CD8-positive, alpha-beta T cell (primary cell): ENCODE measurements at regions of chr3 and their contacts with region 1.

Region 1: GRCh38 chr3:5187156-5187919 is at the start of gene EDEM1:
- DNase-seq: peak; percentile 85 to 98 (median 93)
- ATAC-seq: peak; percentile 82
- H3K4me3 ChIP-seq: peak within 1 kb of the TSS; percentile 84 to 92
- H3K4me3 Mint-ChIP-seq: peak within 1 kb of the TSS; percentile 100
- H3K27ac ChIP-seq: peak within 1 kb of the TSS; percentile 89 to 95
- H3K27ac Mint-ChIP-seq: peak within 1 kb of the TSS; percentile 100
- H3K4me1 ChIP-seq: peaks cover 27% of the 10 kb centered on the region
- H3K4me1 Mint-ChIP-seq: peaks cover 42% of the 10 kb centered on the region
- H3K27me3 ChIP-seq: no peaks in the 10 kb centered on the region
- H3K27me3 Mint-ChIP-seq: no peaks in the 10 kb centered on the region
- CTCF ChIP-seq: no peak
- total RNA-seq, gene EDEM1: 73.0 to 88.9 TPM

Region 2: GRCh38 chr3:3799173-3800079 is 1387.9 kb before region 1 on chr3 and contains the start of gene LRRN1:
- CTCF ChIA-PET with region 1: no interaction called
- POLR2A ChIA-PET with region 1: no interaction called
- intact Hi-C with region 1: loop called in 1 of 2 experiments (anchors 5 kb)
- DNase-seq: peak; percentile 12 to 80 (median 57)
- ATAC-seq: peak; percentile 65
- H3K4me3 ChIP-seq: peak within 1 kb of the TSS; percentile 52 to 81
- H3K4me3 Mint-ChIP-seq: peak within 1 kb of the TSS; percentile 94
- H3K27ac ChIP-seq: peak within 1 kb of the TSS; percentile 62 to 76
- H3K27ac Mint-ChIP-seq: peak within 1 kb of the TSS; percentile 94
- H3K4me1 ChIP-seq: peaks cover 5% of the 10 kb centered on the region
- H3K4me1 Mint-ChIP-seq: peaks cover 25% of the 10 kb centered on the region
- H3K27me3 ChIP-seq: peaks cover 0 to 4% of the 10 kb centered on the region in 2 experiments
- H3K27me3 Mint-ChIP-seq: peaks cover 4% of the 10 kb centered on the region
- CTCF ChIP-seq: no peak
- total RNA-seq, gene LRRN1: 1.0 to 1.2 TPM

Region 3: GRCh38 chr3:4866841-4867240 is 320.5 kb before region 1 on chr3:
- CTCF ChIA-PET with region 1: no interaction called
- POLR2A ChIA-PET with region 1: no interaction called
- intact Hi-C with region 1: no loop called
- DNase-seq: peak in 2 of 9 experiments; percentile 47 to 61
- ATAC-seq: no peak
- H3K4me3 ChIP-seq: no peak overlapping the region
- H3K4me3 Mint-ChIP-seq: peak overlapping the region; percentile 84
- H3K27ac ChIP-seq: peak overlapping the region; percentile 67 to 83
- H3K27ac Mint-ChIP-seq: peak overlapping the region; percentile 94
- H3K4me1 ChIP-seq: peaks cover 25% of the 10 kb centered on the region
- H3K4me1 Mint-ChIP-seq: peaks cover 34% of the 10 kb centered on the region
- H3K27me3 ChIP-seq: no peaks in the 10 kb centered on the region
- H3K27me3 Mint-ChIP-seq: no peaks in the 10 kb centered on the region
- CTCF ChIP-seq: no peak

Region 4: GRCh38 chr3:5122030-5122740 is 65.2 kb before region 1 on chr3 and contains the start of gene ARL8B:
- CTCF ChIA-PET with region 1: interaction called, 4 read pairs
- POLR2A ChIA-PET with region 1: interaction called, 9 read pairs
- intact Hi-C with region 1: loop called (anchors 1 kb)
- DNase-seq: peak; percentile 80 to 95 (median 91)
- ATAC-seq: peak; percentile 98
- H3K4me3 ChIP-seq: peak within 1 kb of the TSS; percentile 91 to 98
- H3K4me3 Mint-ChIP-seq: peak within 1 kb of the TSS; percentile 81
- H3K27ac ChIP-seq: peak within 1 kb of the TSS; percentile 87 to 92
- H3K27ac Mint-ChIP-seq: peak within 1 kb of the TSS; percentile 81
- H3K4me1 ChIP-seq: peaks cover 31% of the 10 kb centered on the region
- H3K4me1 Mint-ChIP-seq: peaks cover 38% of the 10 kb centered on the region
- H3K27me3 ChIP-seq: no peaks in the 10 kb centered on the region
- H3K27me3 Mint-ChIP-seq: no peaks in the 10 kb centered on the region
- CTCF ChIP-seq: peak; percentile 92
- total RNA-seq, gene ARL8B: 54.1 to 61.7 TPM

Region 5: GRCh38 chr3:5202222-5202621 is 14.9 kb after region 1 on chr3:
- CTCF ChIA-PET with region 1: interaction called, 11 read pairs
- POLR2A ChIA-PET with region 1: interaction called, 80 read pairs
- intact Hi-C with region 1: loop called (anchors 1 kb)
- DNase-seq: no peak
- ATAC-seq: no peak
- H3K4me3 ChIP-seq: no peak overlapping the region
- H3K4me3 Mint-ChIP-seq: no peak overlapping the region
- H3K27ac ChIP-seq: no peak overlapping the region
- H3K27ac Mint-ChIP-seq: peak overlapping the region; percentile 27
- H3K4me1 ChIP-seq: peaks cover 32% of the 10 kb centered on the region
- H3K4me1 Mint-ChIP-seq: peaks cover 35% of the 10 kb centered on the region
- H3K27me3 ChIP-seq: no peaks in the 10 kb centered on the region
- H3K27me3 Mint-ChIP-seq: no peaks in the 10 kb centered on the region
- CTCF ChIP-seq: no peak

Region 6: GRCh38 chr3:5366746-5367145 is 179.4 kb after region 1 on chr3:
- CTCF ChIA-PET with region 1: no interaction called
- POLR2A ChIA-PET with region 1: no interaction called
- intact Hi-C with region 1: no loop called
- DNase-seq: no peak
- ATAC-seq: no peak
- H3K4me3 ChIP-seq: no peak overlapping the region
- H3K4me3 Mint-ChIP-seq: no peak overlapping the region
- H3K27ac ChIP-seq: no peak overlapping the region
- H3K27ac Mint-ChIP-seq: no peak overlapping the region
- H3K4me1 ChIP-seq: no peaks in the 10 kb centered on the region
- H3K4me1 Mint-ChIP-seq: no peaks in the 10 kb centered on the region
- H3K27me3 ChIP-seq: no peaks in the 10 kb centered on the region
- H3K27me3 Mint-ChIP-seq: no peaks in the 10 kb centered on the region
- CTCF ChIP-seq: no peak

Region 7: GRCh38 chr3:6971933-6972332 is 1784.6 kb after region 1 on chr3:
- CTCF ChIA-PET with region 1: no interaction called
- POLR2A ChIA-PET with region 1: no interaction called
- intact Hi-C with region 1: no loop called
- DNase-seq: no peak
- ATAC-seq: no peak
- H3K4me3 ChIP-seq: no peak overlapping the region
- H3K4me3 Mint-ChIP-seq: no peak overlapping the region
- H3K27ac ChIP-seq: no peak overlapping the region
- H3K27ac Mint-ChIP-seq: no peak overlapping the region
- H3K4me1 ChIP-seq: no peaks in the 10 kb centered on the region
- H3K4me1 Mint-ChIP-seq: no peaks in the 10 kb centered on the region
- H3K27me3 ChIP-seq: no peaks in the 10 kb centered on the region
- H3K27me3 Mint-ChIP-seq: no peaks in the 10 kb centered on the region
- CTCF ChIP-seq: no peak